ENCODE measurements at regions of chr22 and their contacts with region 1.

Region 1: DNA sequence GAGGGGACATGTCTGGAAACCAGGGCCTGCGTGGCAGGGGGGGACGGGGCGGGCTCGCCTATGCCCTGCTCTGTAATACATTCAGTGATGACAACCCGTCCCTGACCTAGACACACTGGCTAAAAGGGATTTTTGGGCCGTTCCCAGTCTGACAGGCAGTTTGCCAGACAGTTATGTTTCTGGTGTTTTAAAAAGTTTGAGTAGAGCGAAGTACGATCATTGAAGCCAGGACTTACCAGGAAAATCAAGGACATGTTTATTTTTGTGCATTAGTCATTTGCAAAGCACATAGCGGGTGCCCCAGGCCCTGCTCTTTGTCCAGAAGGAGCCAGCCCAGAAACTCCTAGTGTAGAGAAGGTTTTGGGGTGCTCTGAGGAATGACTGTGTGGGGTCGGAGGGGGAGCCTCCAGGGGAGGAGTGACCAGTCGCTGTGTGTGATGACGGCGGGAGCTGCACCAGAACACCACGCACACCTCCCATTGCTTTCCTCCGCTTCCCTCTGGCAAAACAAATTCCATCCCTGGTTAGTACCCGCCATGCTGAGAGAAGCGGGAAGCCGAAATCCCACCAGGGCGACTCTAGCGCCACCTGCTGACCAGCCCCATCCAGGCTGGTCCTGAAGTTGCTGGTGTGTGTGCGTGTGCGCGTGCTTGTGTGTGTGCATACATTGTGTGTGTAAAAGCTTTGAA is 50.8 kb downstream of the FBLN1 start:
- DNase-seq: peak; percentile 15
- H3K4me3 Mint-ChIP-seq: no peak overlapping the region
- H3K27ac Mint-ChIP-seq: no peak overlapping the region
- H3K4me1 Mint-ChIP-seq: no peaks in the 10 kb centered on the region
- H3K27me3 Mint-ChIP-seq: no peaks in the 10 kb centered on the region

Region 2: GRCh38 chr22:45441138-45441537 is 112.4 kb before region 1 on chr22:
- intact Hi-C with region 1: loop called (anchors 5 kb)
- DNase-seq: peak; percentile 7
- H3K4me3 Mint-ChIP-seq: peak overlapping the region; percentile 34
- H3K27ac Mint-ChIP-seq: no peak overlapping the region
- H3K4me1 Mint-ChIP-seq: peaks cover 12% of the 10 kb centered on the region
- H3K27me3 Mint-ChIP-seq: peaks cover 16% of the 10 kb centered on the region